ENCODE measurements at regions of chr6 and their contacts with region 1.

Region 1: DNA sequence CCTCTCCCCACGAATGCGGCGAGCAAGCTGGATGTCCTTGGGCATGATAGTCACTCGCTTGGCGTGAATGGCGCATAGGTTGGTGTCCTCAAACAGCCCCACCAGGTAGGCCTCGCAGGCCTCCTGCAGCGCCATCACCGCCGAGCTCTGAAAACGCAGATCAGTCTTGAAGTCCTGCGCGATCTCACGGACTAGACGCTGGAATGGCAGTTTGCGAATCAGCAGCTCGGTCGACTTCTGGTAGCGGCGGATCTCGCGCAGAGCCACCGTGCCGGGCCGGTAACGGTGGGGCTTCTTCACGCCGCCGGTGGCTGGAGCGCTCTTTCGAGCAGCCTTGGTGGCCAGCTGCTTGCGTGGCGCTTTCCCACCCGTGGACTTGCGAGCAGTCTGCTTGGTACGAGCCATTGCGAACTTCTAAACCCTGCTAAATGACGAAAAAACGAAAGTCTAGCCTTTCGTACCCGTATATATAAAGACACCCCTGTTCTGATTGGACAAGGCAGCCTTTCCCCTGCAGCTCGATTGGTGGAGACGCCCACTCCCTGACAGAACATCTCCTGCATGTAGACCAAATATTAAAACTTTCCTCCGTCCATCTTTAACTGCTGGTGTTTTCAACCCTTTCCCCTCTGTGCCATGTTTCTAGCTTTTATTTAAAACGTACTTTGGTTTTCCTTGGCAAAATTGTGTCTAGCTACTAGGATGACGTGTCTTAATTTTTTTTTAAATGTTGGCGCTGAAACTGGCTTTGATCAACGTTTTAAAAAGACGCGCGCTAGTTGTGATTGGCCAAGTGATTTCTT is 109.8 kb downstream of the HFE start:
- DNase-seq: peak; percentile 91
- H3K4me3 Mint-ChIP-seq: peak overlapping the region; percentile 99
- H3K27ac Mint-ChIP-seq: peak overlapping the region; percentile 98
- H3K4me1 Mint-ChIP-seq: peaks cover 44% of the 10 kb centered on the region
- H3K27me3 Mint-ChIP-seq: no peaks in the 10 kb centered on the region

Region 2: DNA sequence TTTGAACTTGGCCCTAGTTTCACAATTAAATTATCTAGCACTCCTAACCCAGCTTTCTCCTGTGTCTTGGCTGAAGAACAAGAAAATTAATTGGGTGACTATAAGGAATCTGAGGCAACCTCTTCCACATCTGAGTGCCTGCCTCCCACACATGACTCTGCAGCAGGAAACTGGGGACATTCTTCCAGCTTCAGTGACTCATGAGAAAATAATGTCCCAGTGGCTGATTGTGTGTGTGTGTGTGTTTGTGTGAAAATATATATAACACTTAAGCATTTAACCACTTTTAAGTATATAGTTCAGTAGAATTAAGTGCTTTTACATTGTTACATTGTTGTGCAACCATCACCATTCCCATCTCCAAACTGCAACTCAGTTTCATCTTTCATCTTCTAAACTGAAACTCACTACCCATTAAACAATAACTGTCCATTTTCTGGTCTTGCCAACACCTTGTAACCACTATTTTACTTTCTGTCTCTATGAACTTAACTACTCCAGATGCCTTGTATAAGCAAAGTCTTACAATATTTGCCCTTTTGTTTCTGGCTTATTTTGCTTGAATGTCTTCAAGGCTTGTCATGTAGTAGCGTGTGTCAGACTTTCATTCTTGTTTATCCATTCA is 225.7 kb before region 1 on chr6:
- CTCF ChIA-PET with region 1: no interaction called
- POLR2A ChIA-PET with region 1: no interaction called
- DNase-seq: no peak
- H3K4me3 Mint-ChIP-seq: no peak overlapping the region
- H3K27ac Mint-ChIP-seq: no peak overlapping the region
- H3K4me1 Mint-ChIP-seq: peaks cover 62% of the 10 kb centered on the region
- H3K27me3 Mint-ChIP-seq: no peaks in the 10 kb centered on the region

Region 3: DNA sequence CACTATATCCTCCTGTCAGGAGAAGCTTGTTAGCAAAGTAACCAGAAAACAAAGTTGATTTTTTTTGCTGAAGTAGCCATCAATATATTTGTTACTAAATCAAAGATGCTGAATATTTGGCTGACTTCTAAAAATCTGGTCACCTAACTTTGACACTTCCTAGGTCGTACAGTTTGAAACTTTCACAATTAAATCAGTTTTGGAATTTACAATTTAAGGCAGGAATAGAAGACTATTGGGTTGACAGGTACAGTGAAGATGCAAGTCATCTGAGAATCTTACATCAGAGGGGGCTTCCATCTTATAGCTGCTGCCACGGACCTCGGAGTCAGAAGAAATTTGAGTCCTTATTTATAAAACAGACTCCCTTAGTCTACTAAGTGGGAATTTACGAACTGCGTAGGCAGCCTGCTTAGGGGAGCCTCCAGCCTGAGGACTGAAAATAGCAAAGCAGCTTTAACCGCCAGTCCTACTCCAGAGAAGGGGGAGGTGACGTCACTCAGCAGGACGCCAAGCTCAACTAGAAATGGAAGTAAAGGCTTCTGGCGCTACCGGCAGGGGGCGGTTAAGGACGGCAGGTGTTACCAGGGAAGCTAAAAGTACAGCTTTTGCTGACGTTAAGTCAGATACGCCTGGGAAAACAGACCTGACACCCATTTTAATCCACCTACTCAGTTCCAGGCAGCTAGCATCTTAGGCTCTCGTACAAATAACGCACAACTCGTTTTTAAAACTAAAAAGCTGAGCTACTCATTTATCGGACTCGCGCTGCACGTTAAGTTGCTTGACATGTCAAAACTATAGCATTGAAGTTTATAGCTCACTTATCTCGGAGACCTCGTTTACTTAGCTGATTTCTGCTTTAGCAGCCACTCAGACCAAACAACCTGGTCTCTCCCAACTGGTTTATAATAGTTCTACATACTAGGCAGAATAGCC is 170.9 kb before region 1 on chr6:
- CTCF ChIA-PET with region 1: interaction called, 8 read pairs
- POLR2A ChIA-PET with region 1: interaction called, 68 read pairs
- DNase-seq: peak; percentile 96
- H3K4me3 Mint-ChIP-seq: peak overlapping the region; percentile 88
- H3K27ac Mint-ChIP-seq: peak overlapping the region; percentile 100
- H3K4me1 Mint-ChIP-seq: peaks cover 86% of the 10 kb centered on the region
- H3K27me3 Mint-ChIP-seq: peaks cover 3% of the 10 kb centered on the region

Region 4: DNA sequence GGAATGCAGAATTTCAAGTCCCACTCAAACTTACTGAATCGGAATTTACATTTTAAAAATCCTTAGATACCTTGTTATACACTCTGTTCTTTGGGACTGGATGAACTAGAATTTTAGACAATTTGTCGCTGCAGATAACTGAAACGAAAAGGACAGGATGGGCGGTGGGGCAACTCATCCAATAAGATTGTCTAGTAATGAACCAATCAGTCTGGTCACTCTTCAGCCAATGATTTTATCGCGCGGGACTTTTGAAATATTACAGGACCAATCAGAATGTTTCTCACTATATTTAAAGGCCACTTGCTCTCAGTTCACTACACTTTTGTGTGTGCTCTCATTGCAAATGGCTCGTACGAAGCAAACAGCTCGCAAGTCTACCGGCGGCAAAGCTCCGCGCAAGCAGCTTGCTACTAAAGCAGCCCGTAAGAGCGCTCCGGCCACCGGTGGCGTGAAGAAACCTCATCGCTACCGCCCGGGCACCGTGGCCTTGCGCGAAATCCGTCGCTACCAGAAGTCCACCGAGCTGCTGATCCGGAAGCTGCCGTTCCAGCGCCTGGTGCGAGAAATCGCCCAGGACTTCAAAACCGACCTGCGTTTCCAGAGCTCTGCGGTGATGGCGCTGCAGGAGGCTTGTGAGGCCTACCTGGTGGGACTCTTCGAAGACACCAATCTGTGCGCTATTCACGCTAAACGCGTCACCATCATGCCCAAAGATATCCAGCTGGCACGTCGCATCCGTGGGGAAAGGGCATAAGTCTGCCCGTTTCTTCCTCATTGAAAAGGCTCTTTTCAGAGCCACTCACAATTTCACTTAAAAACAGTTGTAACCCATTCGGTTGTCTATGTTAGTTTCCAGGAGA is 151.8 kb before region 1 on chr6:
- CTCF ChIA-PET with region 1: no interaction called
- POLR2A ChIA-PET with region 1: interaction called, 32 read pairs
- DNase-seq: peak; percentile 93
- H3K4me3 Mint-ChIP-seq: peak overlapping the region; percentile 83
- H3K27ac Mint-ChIP-seq: peak overlapping the region; percentile 99
- H3K4me1 Mint-ChIP-seq: peaks cover 44% of the 10 kb centered on the region
- H3K27me3 Mint-ChIP-seq: no peaks in the 10 kb centered on the region

Region 5: DNA sequence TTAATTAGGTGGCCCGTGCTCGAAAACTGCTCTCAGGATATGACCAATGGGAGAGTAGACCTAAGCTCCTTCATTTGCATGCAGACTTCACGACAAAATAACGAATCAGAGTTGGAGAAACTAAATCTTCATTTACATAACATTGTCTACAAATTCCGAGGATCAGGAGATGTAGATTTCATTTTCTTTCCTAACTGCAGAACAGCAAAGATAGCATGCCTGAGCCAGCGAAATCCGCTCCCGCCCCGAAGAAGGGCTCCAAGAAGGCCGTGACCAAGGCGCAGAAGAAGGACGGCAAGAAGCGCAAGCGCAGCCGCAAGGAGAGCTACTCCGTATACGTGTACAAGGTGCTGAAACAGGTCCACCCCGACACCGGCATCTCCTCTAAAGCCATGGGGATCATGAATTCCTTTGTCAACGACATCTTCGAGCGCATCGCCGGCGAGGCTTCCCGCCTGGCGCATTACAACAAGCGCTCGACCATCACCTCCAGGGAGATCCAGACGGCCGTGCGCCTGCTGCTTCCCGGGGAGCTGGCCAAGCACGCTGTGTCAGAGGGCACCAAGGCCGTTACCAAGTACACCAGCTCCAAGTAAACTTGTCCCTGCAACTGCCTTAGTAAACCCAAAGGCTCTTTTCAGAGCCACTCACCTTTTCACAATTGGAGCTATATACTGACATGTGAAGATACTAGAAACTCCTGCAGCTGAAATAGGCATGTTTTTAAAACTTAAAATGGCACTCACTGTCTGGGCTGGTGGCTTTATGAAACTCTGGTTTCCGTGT is 13.3 kb before region 1 on chr6:
- CTCF ChIA-PET with region 1: interaction called, 59 read pairs
- POLR2A ChIA-PET with region 1: interaction called, 96 read pairs
- DNase-seq: peak; percentile 75
- H3K4me3 Mint-ChIP-seq: peak overlapping the region; percentile 91
- H3K27ac Mint-ChIP-seq: peak overlapping the region; percentile 99
- H3K4me1 Mint-ChIP-seq: peaks cover 73% of the 10 kb centered on the region
- H3K27me3 Mint-ChIP-seq: no peaks in the 10 kb centered on the region

Region 6: GRCh38 chr6:26234421-26235296 is 37.6 kb after region 1 on chr6:
- CTCF ChIA-PET with region 1: interaction called, 10 read pairs
- POLR2A ChIA-PET with region 1: interaction called, 104 read pairs
- DNase-seq: peak; percentile 86
- H3K4me3 Mint-ChIP-seq: peak overlapping the region; percentile 85
- H3K27ac Mint-ChIP-seq: peak overlapping the region; percentile 100
- H3K4me1 Mint-ChIP-seq: peaks cover 54% of the 10 kb centered on the region
- H3K27me3 Mint-ChIP-seq: no peaks in the 10 kb centered on the region

Region 7: DNA sequence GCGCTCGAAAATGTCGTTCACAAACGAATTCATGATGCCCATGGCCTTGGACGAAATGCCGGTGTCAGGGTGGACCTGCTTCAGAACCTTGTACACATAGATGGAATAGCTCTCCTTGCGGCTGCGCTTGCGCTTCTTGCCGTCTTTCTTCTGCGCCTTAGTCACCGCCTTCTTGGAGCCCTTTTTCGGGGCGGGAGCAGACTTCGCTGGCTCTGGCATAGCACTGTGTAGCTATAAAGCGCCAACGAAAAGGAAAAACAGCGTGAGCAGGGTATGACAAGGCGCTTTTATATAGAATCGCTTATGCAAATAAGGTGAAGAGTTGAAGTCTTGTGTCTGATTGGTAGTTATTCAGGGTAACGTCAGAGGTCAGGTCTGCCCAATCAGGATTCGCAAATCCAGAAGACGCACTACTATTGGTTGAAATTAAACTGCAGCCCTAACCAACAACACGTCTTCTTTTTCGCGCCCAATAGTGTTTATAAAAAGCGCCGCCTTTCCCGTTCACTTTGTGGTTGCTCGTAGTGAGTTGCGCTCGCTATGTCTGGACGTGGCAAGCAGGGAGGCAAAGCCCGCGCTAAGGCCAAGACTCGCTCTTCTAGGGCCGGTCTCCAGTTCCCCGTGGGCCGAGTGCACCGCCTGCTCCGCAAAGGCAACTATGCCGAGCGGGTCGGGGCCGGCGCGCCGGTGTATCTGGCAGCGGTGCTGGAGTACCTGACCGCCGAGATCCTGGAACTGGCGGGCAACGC is 935.7 kb after region 1 on chr6:
- CTCF ChIA-PET with region 1: no interaction called
- POLR2A ChIA-PET with region 1: interaction called, 16 read pairs
- DNase-seq: peak; percentile 94
- H3K4me3 Mint-ChIP-seq: no peak overlapping the region
- H3K27ac Mint-ChIP-seq: no peak overlapping the region
- H3K4me1 Mint-ChIP-seq: peaks cover 66% of the 10 kb centered on the region
- H3K27me3 Mint-ChIP-seq: no peaks in the 10 kb centered on the region